SK-N-SH (cell line): ENCODE measurements at regions of chr17 and their contacts with region 1.

Region 1: DNA sequence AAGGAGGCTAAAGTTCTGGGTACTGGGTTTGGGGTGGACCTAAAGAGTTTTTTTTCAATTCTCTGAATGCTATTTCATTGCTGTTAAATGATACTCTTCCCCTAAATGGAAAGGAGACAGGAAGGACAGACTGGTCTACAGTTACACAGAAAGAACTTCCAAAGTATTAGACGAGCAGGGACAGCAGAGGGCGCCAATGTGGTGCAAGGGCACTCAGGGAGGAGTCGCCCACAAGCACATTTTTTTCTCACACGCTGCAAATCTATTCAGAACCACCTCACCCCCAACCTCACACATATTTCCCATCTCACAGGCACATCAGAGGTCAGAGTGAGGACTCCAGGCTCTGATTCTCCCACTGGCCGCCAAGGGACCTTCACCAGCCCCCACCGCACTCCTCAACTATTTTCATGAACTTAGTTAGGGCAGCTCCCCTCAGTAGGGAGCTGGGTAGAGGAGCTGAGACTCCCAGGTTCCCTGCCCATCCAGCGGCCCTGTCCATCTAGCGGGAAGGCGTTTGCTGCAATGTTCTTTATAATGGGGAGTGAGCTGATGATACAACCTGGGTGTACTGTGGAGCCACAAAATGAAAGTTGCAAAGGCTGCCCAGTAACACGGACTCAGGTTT is 6.8 kb upstream of the CA4 start:
- DNase-seq: peak; percentile 84
- H3K4me3 ChIP-seq: peak overlapping the region; percentile 35 to 57; a peak in 3 of 4 replicates
- H3K27ac ChIP-seq: peak overlapping the region in 1 of 2 experiments; percentile 83; a peak in 2 of 4 replicates
- H3K4me1 ChIP-seq: peaks cover 9 to 13% of the 10 kb centered on the region in 2 experiments; a peak in 3 of 4 replicates
- H3K27me3 ChIP-seq: no peaks in the 10 kb centered on the region
- CTCF ChIP-seq: peak; percentile 99
- EP300 ChIP-seq: no peak
- RAD21 ChIP-seq: peak; percentile 94

Region 2: GRCh38 chr17:60127068-60128054 is 15.6 kb before region 1 on chr17:
- CTCF ChIA-PET with region 1: interaction called, 11 read pairs
- POLR2A ChIA-PET with region 1: no interaction called
- DNase-seq: peak; percentile 14
- H3K4me3 ChIP-seq: no peak overlapping the region
- H3K27ac ChIP-seq: no peak overlapping the region
- H3K4me1 ChIP-seq: no peaks in the 10 kb centered on the region
- H3K27me3 ChIP-seq: no peaks in the 10 kb centered on the region
- CTCF ChIP-seq: no peak
- EP300 ChIP-seq: no peak
- RAD21 ChIP-seq: no peak

Region 3: GRCh38 chr17:60169921-60170742 is 27.1 kb after region 1 on chr17:
- CTCF ChIA-PET with region 1: interaction called, 19 read pairs
- POLR2A ChIA-PET with region 1: no interaction called
- DNase-seq: no peak
- H3K4me3 ChIP-seq: no peak overlapping the region
- H3K27ac ChIP-seq: no peak overlapping the region
- H3K4me1 ChIP-seq: peaks cover 3 to 7% of the 10 kb centered on the region in 2 experiments; a peak in 2 of 4 replicates
- H3K27me3 ChIP-seq: no peaks in the 10 kb centered on the region
- CTCF ChIP-seq: no peak
- EP300 ChIP-seq: no peak
- RAD21 ChIP-seq: no peak

Region 4: GRCh38 chr17:60193482-60193881 is 50.5 kb after region 1 on chr17:
- CTCF ChIA-PET with region 1: interaction called, 12 read pairs
- POLR2A ChIA-PET with region 1: no interaction called
- DNase-seq: no peak
- H3K4me3 ChIP-seq: no peak overlapping the region
- H3K27ac ChIP-seq: no peak overlapping the region
- H3K4me1 ChIP-seq: peaks cover 0 to 5% of the 10 kb centered on the region in 2 experiments; a peak in 2 of 4 replicates
- H3K27me3 ChIP-seq: no peaks in the 10 kb centered on the region
- CTCF ChIP-seq: no peak
- EP300 ChIP-seq: no peak
- RAD21 ChIP-seq: no peak

Region 5: DNA sequence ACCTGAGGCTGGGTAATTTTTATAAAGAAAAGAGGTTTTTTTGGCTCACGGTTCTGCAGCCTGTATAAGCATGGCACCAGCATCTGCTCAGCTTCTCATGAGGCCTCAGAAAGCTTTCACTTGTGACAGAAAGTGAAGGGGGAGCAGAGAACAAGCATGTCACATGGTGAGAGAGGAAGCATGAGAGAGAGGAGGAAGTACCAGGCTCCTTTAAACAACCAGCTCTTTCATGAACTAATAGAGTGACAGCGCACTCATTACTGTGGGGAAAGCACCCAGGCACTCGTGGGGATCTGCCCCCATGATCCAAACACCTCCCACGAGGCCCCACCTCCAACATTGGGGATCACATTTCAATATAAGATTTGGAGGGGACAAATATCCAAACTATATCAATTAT is 162.2 kb after region 1 on chr17:
- CTCF ChIA-PET with region 1: no interaction called
- POLR2A ChIA-PET with region 1: no interaction called
- DNase-seq: no peak
- H3K4me3 ChIP-seq: no peak overlapping the region
- H3K27ac ChIP-seq: no peak overlapping the region
- H3K4me1 ChIP-seq: no peaks in the 10 kb centered on the region
- H3K27me3 ChIP-seq: no peaks in the 10 kb centered on the region
- CTCF ChIP-seq: no peak
- EP300 ChIP-seq: no peak
- RAD21 ChIP-seq: no peak

Region 6: DNA sequence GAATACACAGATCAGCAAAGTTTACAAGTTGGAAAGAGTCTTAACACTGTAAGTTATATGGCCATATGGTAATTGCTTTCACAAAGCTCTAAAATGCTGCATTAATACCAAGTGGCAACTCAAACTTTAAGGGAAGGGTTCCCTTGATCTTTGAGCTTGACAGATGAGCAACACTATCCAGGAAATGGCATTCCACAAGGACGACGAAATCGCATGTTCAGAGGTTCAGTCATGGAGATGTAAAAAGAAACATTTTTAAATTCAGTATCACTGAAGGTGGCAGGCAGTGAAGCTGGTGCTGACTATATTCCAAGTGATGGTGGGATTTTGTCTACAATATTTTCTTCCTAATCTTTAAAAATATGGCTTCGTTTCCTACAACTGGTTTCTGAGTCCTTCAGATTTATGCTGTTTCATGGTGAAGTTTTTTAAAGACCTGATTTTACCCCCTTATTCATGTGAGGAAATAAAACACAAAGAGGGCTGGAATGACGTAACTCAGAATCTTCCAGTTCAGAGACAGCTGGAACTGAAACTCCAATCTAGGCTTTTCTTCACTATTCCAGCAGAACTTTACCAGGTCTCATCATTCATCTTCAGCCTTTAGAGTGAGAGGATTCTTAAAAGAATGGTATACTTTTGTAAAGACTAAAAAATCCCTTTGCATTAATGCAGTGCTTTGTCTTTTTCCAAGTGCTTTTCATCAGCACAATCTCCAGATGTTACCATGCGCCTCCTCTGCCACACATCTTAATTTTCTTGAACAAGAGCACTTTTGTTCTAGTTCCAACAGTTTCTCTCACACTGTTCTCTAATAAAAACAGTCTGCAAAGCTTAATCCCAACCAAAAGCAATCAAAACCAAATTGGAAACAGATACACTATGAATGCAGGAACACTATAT is 299.5 kb after region 1 on chr17:
- CTCF ChIA-PET with region 1: interaction called, 11 read pairs
- POLR2A ChIA-PET with region 1: no interaction called
- DNase-seq: peak; percentile 10
- H3K4me3 ChIP-seq: no peak overlapping the region
- H3K27ac ChIP-seq: peak overlapping the region; percentile 47 to 49
- H3K4me1 ChIP-seq: peaks cover 7 to 23% of the 10 kb centered on the region in 2 experiments; a peak in 3 of 4 replicates
- H3K27me3 ChIP-seq: no peaks in the 10 kb centered on the region
- CTCF ChIP-seq: no peak
- EP300 ChIP-seq: peak; percentile 6 to 65; a peak in 2 of 4 replicates
- RAD21 ChIP-seq: no peak